K562 (cell line): ENCODE measurements at regions of chr18 and their contacts with region 1.

Region 1: GRCh38 chr18:59249205-59249774 is 24.0 kb downstream of the RAX start:
- DNase-seq: peak; percentile 16 to 59 (median 24)
- ATAC-seq: peak; percentile 81
- H3K4me3 ChIP-seq: no peak overlapping the region
- H3K27ac ChIP-seq: no peak overlapping the region
- H3K4me1 ChIP-seq: no peaks in the 10 kb centered on the region
- H3K27me3 ChIP-seq: no peaks in the 10 kb centered on the region
- CTCF ChIP-seq: peak; percentile 50 to 67 (median 59); a peak in 5 of 6 replicates
- EP300 ChIP-seq: no peak
- POLR2A ChIP-seq: no peak
- RAD21 ChIP-seq: peak; percentile 66 to 75

Region 2: DNA sequence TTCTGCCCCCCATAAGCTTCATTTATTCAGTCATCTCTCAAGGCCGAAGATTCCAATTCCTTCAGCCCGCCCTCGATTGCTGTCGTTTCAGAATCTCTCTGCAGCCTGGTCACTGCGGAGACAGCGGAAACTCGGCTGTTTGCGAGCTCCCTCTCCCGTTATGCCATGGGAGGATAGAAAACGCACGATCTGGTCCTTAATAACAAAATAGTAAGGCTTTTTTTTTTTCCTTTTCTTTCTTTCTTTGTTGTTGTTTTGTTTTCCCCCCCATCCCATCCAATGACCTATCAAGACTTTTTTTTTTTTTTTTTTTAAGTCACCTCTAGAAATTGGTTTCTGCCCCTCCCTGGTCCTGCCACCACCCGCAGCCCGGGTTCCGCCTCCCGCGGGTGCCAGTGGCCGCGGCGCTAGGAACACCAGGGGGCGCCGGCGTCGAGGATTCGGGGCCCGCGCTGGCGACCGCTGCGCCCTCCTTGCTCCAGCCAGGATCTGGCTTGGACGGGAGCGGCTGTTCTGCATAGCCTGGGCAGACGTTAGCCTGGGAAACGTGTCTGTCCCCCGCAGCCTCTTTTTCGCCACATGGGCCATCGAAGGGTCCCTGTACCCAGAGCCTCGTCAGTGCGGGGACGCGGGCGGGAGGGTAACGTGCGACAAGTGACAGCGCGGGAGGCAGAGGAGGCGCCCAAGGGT is 59.1 kb after region 1 on chr18:
- CTCF ChIA-PET with region 1: no interaction called
- POLR2A ChIA-PET with region 1: no interaction called
- in situ Hi-C with region 1: no loop called
- intact Hi-C with region 1: loop called (anchors 1 kb)
- DNase-seq: peak; percentile 67 to 71 (median 68)
- ATAC-seq: peak; percentile 99
- H3K4me3 ChIP-seq: peak overlapping the region; percentile 28
- H3K27ac ChIP-seq: no peak overlapping the region
- H3K4me1 ChIP-seq: peaks cover 0 to 5% of the 10 kb centered on the region in 2 experiments; a peak in 2 of 5 replicates
- H3K27me3 ChIP-seq: peaks cover 3 to 17% of the 10 kb centered on the region in 2 experiments; a peak in 4 of 5 replicates
- CTCF ChIP-seq: peak; percentile 68 to 86 (median 68)
- EP300 ChIP-seq: no peak
- POLR2A ChIP-seq: no peak
- RAD21 ChIP-seq: peak; percentile 82 to 83